Activated B cell treated with CpG ODN at 0.5 μM for 24 hours (primary cell): ENCODE measurements at regions of chr3 and their contacts with region 1.

Region 1: DNA sequence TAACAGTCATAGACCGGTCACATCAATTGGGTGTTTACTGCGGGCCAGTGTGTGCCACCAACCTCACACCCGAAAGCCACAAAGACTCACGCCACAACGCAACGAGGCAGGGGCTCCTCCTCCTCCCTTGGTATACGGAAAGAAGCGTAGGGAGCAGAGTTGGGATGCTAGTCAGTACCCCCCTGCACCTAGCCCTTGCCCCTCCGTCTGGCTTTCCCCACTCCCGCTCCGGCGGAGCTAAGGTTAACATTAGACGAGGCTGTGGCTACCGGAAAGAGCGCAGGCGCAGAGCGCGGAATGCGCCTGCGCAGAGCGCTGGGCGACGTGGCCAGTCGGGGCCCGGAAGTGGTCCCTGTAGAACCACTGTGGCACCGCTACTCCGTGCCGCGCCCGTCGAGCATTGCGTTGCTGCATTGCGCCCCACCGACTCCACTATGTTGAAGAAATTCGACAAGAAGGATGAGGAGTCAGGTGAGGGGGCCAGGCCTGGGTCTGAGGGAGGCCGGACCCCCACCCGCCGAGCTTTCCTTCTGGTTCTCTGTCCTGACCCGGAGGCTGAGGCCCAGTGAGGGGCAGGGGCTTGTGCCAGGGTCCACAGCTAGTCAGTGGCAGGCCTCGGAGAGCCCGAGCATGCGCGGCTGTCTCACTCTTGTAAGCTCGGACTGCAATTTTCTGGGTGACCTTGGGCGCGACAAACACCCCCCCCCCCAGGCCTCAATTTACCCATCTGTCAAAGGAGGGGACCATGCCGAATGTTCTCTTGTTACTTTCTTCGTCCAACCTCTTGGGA is at the start of gene COPG1:
- DNase-seq: peak; percentile 87
- ATAC-seq: peak; percentile 87
- H3K4me3 Mint-ChIP-seq: peak within 1 kb of the TSS; percentile 92
- H3K27ac Mint-ChIP-seq: peak within 1 kb of the TSS; percentile 89
- H3K4me1 Mint-ChIP-seq: peaks cover 26% of the 10 kb centered on the region
- H3K27me3 Mint-ChIP-seq: no peaks in the 10 kb centered on the region
- CTCF ChIP-seq: no peak
- total RNA-seq, gene COPG1: 92.2 and 101 TPM in 2 replicates

Region 2: DNA sequence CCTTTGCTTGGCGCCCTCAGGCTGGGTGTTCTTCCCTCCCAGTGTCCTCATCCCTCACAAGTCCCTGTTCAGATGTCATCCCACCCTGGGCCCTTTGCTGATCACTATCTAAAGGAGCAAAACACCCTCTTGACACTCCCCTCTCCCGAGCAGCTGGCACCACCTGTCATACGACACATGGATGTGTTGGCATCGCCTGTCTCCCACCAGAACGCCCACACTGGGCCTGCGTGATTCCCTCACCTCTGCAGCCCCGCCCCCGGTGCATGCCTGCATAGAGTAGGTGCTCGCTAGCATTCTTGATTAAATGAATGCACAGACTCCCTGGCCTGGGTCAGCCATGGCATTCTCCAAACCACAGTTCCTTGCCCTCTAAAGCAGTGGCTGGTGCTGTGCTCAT is 858.6 kb before region 1 on chr3:
- CTCF ChIA-PET with region 1: no interaction called
- POLR2A ChIA-PET with region 1: no interaction called
- intact Hi-C with region 1: no loop called
- DNase-seq: no peak
- ATAC-seq: no peak
- H3K4me3 Mint-ChIP-seq: no peak overlapping the region
- H3K27ac Mint-ChIP-seq: no peak overlapping the region
- H3K4me1 Mint-ChIP-seq: no peaks in the 10 kb centered on the region
- H3K27me3 Mint-ChIP-seq: no peaks in the 10 kb centered on the region
- CTCF ChIP-seq: no peak

Region 3: DNA sequence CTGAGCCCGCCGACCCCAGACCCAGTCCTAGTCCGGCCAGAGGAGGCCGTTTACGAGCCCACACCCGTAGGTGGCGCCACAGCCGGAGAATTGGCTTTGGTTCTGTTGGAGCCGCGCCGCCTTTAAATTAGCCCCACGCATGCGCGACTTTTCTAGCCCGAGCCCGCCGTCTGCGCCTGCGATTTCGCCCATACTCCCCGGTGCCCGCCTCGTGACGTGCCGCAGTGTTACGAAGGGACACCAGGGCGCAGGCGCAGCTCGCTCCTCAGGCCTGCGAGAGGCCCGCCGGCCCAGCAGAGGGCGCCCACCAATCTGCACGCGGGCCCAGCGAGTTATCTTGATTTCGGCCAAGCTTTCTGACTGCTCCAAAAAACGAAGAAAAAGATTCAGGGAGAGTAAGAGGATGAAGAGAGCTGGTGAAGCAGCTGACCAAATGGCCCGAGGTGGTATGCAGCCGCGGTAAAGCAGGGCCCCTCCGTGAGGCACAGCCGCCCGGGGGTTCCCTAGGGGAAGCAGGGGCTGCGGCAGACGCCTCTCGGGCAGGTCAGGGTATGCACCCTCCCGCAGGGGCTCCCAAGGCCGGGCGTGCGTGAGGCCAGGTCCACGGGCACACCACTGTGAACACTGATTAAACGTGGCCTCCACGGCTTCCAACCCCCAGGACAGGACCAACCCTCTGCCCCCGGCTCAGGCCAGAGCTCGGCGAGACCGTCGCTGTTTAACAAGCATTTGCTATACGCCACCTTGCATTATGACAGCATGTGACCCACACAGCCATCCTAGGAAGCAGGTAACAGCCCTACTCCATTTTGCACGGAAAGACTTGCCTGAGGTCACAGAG is 631.7 kb before region 1 on chr3:
- CTCF ChIA-PET with region 1: no interaction called
- POLR2A ChIA-PET with region 1: no interaction called
- intact Hi-C with region 1: loop called (anchors 5 kb)
- DNase-seq: peak; percentile 96
- ATAC-seq: peak; percentile 96
- H3K4me3 Mint-ChIP-seq: peak overlapping the region; percentile 91
- H3K27ac Mint-ChIP-seq: peak overlapping the region; percentile 88
- H3K4me1 Mint-ChIP-seq: peaks cover 23% of the 10 kb centered on the region
- H3K27me3 Mint-ChIP-seq: no peaks in the 10 kb centered on the region
- CTCF ChIP-seq: peak; percentile 94

Region 4: GRCh38 chr3:129016356-129016719 is 233.1 kb before region 1 on chr3:
- CTCF ChIA-PET with region 1: interaction called, 16 read pairs
- POLR2A ChIA-PET with region 1: interaction called, 9 read pairs
- intact Hi-C with region 1: no loop called
- DNase-seq: peak; percentile 59
- ATAC-seq: peak; percentile 87
- H3K4me3 Mint-ChIP-seq: peak overlapping the region; percentile 55
- H3K27ac Mint-ChIP-seq: peak overlapping the region; percentile 80
- H3K4me1 Mint-ChIP-seq: peaks cover 41% of the 10 kb centered on the region
- H3K27me3 Mint-ChIP-seq: no peaks in the 10 kb centered on the region
- CTCF ChIP-seq: no peak

Region 5: DNA sequence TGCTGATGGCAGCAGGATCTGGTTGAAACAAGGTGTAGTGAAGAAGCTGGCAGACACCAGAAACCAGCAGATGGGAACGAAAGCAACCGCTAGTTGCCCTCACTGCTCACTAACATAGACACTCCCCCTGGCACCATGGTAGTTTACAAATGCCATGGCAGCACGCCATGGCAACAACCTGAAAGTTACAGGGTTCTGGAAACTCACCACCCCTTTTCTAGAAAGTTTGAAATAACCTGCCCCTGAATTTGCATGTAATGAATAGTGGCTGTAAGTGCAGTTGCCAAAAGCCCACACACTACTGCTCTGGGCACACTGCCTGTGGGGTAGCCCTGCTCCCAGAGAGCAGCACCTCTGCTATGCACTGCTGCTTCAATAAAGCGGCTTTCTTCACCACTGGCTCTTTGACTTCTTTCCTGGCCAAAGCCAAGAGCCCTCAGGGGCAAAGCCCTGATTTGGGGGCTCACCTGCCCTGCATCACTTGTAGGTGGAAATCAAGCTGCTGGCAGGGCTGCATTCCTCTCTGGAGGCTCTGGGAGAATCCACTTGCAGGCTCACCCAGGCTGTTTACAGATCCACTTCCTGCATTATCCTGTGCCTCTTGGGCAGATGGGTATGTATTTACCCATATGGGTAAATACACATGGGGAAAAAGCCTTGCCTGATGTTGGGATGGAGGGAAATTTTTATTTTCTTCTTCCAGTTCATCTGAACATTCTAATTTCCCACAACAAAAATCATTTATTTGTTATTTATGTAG is 190.8 kb before region 1 on chr3:
- CTCF ChIA-PET with region 1: interaction called, 135 read pairs
- POLR2A ChIA-PET with region 1: interaction called, 33 read pairs
- intact Hi-C with region 1: loop called (anchors 1 kb)
- DNase-seq: no peak
- ATAC-seq: peak; percentile 47
- H3K4me3 Mint-ChIP-seq: no peak overlapping the region
- H3K27ac Mint-ChIP-seq: no peak overlapping the region
- H3K4me1 Mint-ChIP-seq: peaks cover 6% of the 10 kb centered on the region
- H3K27me3 Mint-ChIP-seq: peaks cover 36% of the 10 kb centered on the region
- CTCF ChIP-seq: no peak

Region 6: DNA sequence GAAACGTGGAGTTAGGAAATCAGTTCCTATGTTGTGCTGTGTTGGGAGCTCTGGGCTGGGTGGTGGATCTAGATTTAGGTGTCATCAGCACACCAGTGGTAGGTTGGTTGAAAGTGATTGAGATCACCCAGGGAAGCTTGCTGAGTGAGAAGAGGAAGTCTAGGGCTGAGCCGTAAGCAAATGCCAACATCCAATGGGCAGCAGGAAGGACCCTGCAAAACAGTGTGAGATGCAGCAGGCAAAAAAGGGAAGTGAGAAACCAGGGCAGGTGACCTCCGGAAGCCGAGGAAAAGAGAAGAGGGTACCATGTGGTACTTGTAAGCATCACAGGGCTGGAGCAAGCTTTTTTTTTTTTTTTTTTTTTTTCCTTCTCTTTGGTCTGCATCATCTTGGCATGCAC is 15.9 kb before region 1 on chr3:
- CTCF ChIA-PET with region 1: interaction called, 10 read pairs
- POLR2A ChIA-PET with region 1: interaction called, 28 read pairs
- intact Hi-C with region 1: loop called (anchors 1 kb)
- DNase-seq: peak; percentile 53
- ATAC-seq: peak; percentile 93
- H3K4me3 Mint-ChIP-seq: peak overlapping the region; percentile 50
- H3K27ac Mint-ChIP-seq: peak overlapping the region; percentile 88
- H3K4me1 Mint-ChIP-seq: peaks cover 52% of the 10 kb centered on the region
- H3K27me3 Mint-ChIP-seq: no peaks in the 10 kb centered on the region
- CTCF ChIP-seq: no peak

Region 7: DNA sequence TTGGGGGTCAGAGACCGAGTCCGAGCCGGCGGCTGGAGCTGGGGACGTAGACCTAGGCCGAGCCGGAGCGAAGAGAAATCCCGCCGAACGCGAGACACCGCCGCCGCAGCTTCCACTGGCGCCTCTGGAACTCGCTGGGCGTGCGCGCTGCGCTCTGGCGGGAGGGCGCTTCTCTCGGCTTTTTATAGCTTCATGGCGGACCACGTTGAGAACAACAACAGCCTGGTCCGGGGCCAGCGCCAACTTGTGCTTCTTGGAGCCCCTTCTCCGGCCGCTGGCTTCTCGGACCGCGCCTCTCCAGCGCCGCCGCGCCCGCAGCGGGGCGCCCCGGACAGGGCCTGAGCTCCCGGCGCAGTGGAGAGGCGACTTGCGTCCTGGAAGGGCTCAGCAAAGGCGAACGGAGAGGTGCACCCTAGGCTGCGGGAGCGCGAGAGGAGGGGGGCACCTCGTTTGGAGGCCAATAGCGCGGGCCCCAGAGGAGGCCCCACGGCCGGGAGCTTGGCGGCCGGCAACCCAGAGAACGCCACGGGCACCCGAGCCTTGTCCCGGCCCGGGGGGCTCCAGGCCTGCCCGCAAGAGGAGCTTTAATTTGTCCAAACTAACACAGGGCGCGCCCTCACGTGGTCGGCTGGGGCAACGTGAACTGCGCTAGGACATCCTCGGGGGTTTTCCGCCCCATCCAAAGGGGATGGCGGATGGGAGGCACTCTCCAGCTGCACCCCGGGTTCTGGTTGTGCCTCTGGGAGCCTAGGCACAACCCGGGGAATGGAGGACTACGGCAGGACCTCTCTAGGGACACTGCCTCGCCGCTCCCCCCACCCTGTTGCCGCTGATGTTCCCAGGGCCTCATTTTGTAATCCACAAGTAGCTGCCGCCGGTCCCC is 66.9 kb after region 1 on chr3:
- CTCF ChIA-PET with region 1: interaction called, 14 read pairs
- POLR2A ChIA-PET with region 1: interaction called, 33 read pairs
- intact Hi-C with region 1: loop called (anchors 1 kb)
- DNase-seq: peak; percentile 69
- ATAC-seq: peak; percentile 38
- H3K4me3 Mint-ChIP-seq: peak overlapping the region; percentile 76
- H3K27ac Mint-ChIP-seq: no peak overlapping the region
- H3K4me1 Mint-ChIP-seq: peaks cover 24% of the 10 kb centered on the region
- H3K27me3 Mint-ChIP-seq: peaks cover 17% of the 10 kb centered on the region
- CTCF ChIP-seq: no peak